Heart left ventricle (tissue), 16 donors: ENCODE measurements at regions of chr16 and their contacts with region 1.

Region 1: GRCh38 chr16:22077700-22078313 is 14.5 kb upstream of the VWA3A start:
- DNase-seq: peak in 4 of 5 donors; percentile 38 to 55 (median 51)
- ATAC-seq: peak in 3 of 4 donors; percentile 44 to 55 (median 54)
- H3K4me3 ChIP-seq: no peak overlapping the region
- H3K27ac ChIP-seq: no peak overlapping the region
- H3K4me1 ChIP-seq: peaks cover 0 to 17% (median 0%) of the 10 kb centered on the region in 12 donors
- H3K27me3 ChIP-seq: no peaks in the 10 kb centered on the region
- CTCF ChIP-seq: peak; percentile 72 to 89 (median 82)
- POLR2A ChIP-seq: no peak

Region 2: DNA sequence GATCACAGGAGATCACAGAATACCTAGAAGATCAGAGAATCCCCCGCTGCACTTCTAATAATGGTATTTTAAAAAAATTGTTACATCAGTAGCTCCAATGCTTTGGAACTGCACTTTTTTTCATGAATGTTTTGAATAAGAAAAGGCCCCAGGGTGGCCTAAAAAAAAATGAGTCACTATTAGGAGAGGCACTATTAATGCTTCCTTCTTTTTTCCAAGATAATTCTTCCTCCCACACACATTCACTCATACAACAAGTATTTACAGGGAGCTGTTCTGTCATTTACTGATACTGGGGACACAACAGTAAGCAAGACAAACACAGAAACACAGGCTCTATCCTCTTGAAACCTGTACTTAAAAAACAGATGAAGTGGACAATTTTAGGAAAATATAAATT is 76.2 kb before region 1 on chr16:
- intact Hi-C with region 1: loop called (anchors 1 to 5 kb)
- DNase-seq: no peak
- ATAC-seq: peak in 1 of 4 donors; percentile 57
- H3K4me3 ChIP-seq: no peak overlapping the region
- H3K27ac ChIP-seq: no peak overlapping the region
- H3K4me1 ChIP-seq: peaks cover 0 to 32% (median 10%) of the 10 kb centered on the region in 12 donors
- H3K27me3 ChIP-seq: no peaks in the 10 kb centered on the region
- CTCF ChIP-seq: no peak
- POLR2A ChIP-seq: no peak

Region 3: DNA sequence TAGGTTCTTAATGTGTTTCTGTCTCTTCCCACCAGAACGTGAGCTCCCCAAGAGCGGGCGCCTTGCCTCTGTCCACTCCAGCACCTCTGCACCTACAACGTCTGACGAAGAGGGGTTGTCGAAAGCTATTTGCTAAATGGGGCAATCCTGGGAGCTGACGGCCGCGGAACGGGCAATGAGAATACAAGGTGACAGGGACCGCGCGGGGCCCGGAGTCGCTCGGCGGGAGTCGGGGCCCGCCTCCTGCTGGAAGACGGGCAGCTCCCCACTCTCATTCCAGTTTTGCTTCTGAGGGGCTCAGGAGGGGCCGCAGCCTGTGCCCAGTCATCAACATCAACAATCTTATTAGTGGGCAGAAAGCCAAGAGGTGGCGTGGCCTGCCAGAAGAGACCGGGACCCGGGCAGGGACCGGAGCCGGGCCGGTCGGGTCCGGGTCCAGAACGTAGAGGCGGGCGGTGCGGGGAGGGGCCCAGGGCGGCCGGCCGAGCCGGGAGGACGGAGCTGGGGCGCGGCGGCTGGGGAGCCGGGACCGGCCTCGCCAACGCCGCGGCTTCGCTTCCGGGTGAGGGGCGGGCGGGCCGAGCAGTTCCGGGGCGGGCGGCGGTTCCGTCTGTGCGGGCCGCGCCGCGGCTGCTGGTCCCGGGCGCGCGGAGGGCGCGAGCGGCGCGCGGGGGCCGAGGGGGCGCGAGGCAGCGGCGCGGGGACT is 70.1 kb before region 1 on chr16 and contains the start of gene MOSMO:
- intact Hi-C with region 1: loop called in 5 of 10 experiments (anchors 2 to 5 kb)
- DNase-seq: peak; percentile 81 to 88 (median 81)
- ATAC-seq: peak; percentile 84 to 97 (median 94)
- H3K4me3 ChIP-seq: peak within 1 kb of the TSS; percentile 55 to 100 (median 94)
- H3K27ac ChIP-seq: peak within 1 kb of the TSS; percentile 42 to 97 (median 90)
- H3K4me1 ChIP-seq: peaks cover 0 to 44% (median 25%) of the 10 kb centered on the region in 12 donors
- H3K27me3 ChIP-seq: no peaks in the 10 kb centered on the region
- CTCF ChIP-seq: peak in 3 of 12 donors; percentile 17 to 38 (median 36)
- POLR2A ChIP-seq: peak in 1 of 2 donors; percentile 56
- total RNA-seq, gene MOSMO: 8.7 to 15.0 (median 11.7) TPM